OCI-LY7 (cell line): ENCODE measurements at regions of chr13 and their contacts with region 1.

Region 1: DNA sequence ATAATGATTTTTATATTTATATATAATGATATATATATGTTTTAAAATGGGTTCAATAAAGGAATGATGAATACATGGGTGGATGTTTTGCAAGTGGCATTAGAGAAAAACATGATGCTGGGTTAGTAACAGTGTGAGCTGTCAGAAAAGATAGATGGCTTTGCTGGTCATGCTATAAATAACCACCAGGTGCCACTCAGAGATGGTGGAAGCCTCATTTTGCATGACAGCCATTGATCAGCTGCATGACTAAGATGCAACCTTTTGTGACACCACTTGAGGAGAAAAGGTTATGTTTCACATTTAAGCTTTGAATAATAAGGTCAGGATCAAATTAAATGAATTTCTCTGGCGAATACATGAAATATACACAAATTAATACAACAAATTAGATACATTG is 737.7 kb downstream of the PCDH9 start:
- DNase-seq: peak; percentile 90
- H3K4me3 ChIP-seq: peak overlapping the region; percentile 25
- H3K27ac ChIP-seq: peak overlapping the region; percentile 63
- H3K4me1 ChIP-seq: peaks cover 30% of the 10 kb centered on the region
- CTCF ChIP-seq: peak; percentile 57

Region 2: GRCh38 chr13:66468656-66469055 is 23.8 kb before region 1 on chr13:
- CTCF ChIA-PET with region 1: interaction called, 4 read pairs
- POLR2A ChIA-PET with region 1: interaction called, 11 read pairs
- intact Hi-C with region 1: no loop called
- DNase-seq: no peak
- H3K4me3 ChIP-seq: no peak overlapping the region
- H3K27ac ChIP-seq: no peak overlapping the region
- H3K4me1 ChIP-seq: peaks cover 9% of the 10 kb centered on the region
- CTCF ChIP-seq: no peak

Region 3: GRCh38 chr13:66994097-66994496 is 501.6 kb after region 1 on chr13:
- CTCF ChIA-PET with region 1: no interaction called
- POLR2A ChIA-PET with region 1: interaction called, 3 read pairs
- intact Hi-C with region 1: loop called (anchors 10 kb)
- DNase-seq: peak; percentile 90
- H3K4me3 ChIP-seq: peak overlapping the region; percentile 49
- H3K27ac ChIP-seq: peak overlapping the region; percentile 99
- H3K4me1 ChIP-seq: peaks cover 70% of the 10 kb centered on the region
- CTCF ChIP-seq: peak; percentile 81

Region 4: GRCh38 chr13:67069117-67069767 is 576.8 kb after region 1 on chr13:
- CTCF ChIA-PET with region 1: no interaction called
- POLR2A ChIA-PET with region 1: no interaction called
- intact Hi-C with region 1: no loop called
- DNase-seq: no peak
- H3K4me3 ChIP-seq: no peak overlapping the region
- H3K27ac ChIP-seq: no peak overlapping the region
- H3K4me1 ChIP-seq: no peaks in the 10 kb centered on the region
- CTCF ChIP-seq: no peak

Region 5: DNA sequence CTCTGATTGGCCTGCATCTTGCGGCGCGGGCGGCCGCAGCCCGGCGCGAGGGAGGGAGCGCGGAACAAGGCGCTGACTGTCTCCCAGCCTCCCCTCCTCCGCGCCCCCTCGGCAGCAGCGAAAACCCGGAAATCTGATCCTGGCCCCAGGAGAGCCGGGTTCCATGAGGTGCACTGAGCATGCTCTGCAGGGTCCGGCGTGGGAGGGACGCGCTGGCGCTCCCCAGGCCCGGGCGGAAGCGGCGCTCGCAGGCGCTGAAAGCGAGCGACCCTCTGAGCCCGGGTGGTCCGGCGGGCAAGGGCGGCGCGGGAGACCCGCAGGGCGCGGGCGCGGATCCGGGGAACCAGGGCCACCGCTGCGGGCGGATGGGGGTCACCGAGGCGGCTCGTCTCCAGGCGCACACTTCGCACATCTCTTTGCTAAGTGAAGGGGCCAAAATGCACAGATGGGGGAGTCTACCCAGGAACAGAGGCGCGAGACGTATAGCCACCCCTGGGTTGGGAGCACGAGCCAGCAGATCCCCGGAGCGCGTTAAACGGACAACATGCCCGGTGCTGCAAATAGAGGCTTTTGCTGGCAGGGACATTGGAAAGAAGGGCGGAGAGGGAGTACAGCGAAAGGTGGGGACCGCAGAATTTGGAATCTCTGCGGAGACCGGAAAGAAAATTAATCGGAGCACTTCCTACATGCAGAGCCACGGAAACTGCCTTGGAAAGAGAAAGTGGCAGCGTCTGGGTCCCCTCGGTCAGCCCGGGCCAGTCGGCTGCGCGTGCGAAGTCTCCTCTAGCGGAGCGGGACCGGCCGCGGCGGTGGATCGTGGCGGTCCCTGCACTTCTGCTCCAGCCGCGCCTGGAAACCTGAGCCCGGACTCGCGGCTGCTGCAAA is 738.2 kb after region 1 on chr13:
- CTCF ChIA-PET with region 1: no interaction called
- POLR2A ChIA-PET with region 1: no interaction called
- intact Hi-C with region 1: loop called (anchors 5 kb)
- DNase-seq: peak; percentile 90
- H3K4me3 ChIP-seq: peak overlapping the region; percentile 90
- H3K27ac ChIP-seq: peak overlapping the region; percentile 51
- H3K4me1 ChIP-seq: peaks cover 22% of the 10 kb centered on the region
- CTCF ChIP-seq: no peak